Transverse colon (tissue), 4 donors: ENCODE measurements at regions of chr17 and their contacts with region 1.

Region 1: DNA sequence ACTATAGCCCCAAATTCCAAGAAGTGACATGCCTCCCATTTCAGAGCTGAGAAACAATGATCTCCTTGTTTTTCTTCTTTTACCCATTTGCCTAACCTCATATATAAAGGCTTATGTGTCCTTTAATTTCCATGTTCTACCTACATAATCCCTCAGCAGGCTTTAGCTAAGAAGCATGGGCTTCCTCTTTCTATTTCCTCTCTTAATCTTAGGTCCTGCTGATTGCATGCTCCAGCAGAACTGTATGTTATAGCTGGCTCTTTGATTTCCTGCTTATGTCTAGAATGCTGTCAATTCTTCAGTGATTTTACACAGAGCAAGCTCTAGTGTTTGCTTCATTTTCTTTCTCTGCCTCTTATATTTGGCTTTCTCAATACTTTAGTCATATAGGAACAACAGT is 151.7 kb upstream of the COX10 start:
- DNase-seq: no peak
- H3K4me3 ChIP-seq: no peak overlapping the region
- H3K27ac ChIP-seq: no peak overlapping the region
- H3K4me1 ChIP-seq: no peaks in the 10 kb centered on the region
- H3K27me3 ChIP-seq: no peaks in the 10 kb centered on the region
- CTCF ChIP-seq: no peak
- EP300 ChIP-seq: no peak
- POLR2A ChIP-seq: no peak

Region 2: GRCh38 chr17:13907581-13907980 is 10.1 kb before region 1 on chr17:
- in situ Hi-C with region 1: no loop called
- intact Hi-C with region 1: no loop called
- DNase-seq: no peak
- H3K4me3 ChIP-seq: no peak overlapping the region
- H3K27ac ChIP-seq: no peak overlapping the region
- H3K4me1 ChIP-seq: no peaks in the 10 kb centered on the region
- H3K27me3 ChIP-seq: no peaks in the 10 kb centered on the region
- CTCF ChIP-seq: no peak
- EP300 ChIP-seq: no peak
- POLR2A ChIP-seq: no peak

Region 3: DNA sequence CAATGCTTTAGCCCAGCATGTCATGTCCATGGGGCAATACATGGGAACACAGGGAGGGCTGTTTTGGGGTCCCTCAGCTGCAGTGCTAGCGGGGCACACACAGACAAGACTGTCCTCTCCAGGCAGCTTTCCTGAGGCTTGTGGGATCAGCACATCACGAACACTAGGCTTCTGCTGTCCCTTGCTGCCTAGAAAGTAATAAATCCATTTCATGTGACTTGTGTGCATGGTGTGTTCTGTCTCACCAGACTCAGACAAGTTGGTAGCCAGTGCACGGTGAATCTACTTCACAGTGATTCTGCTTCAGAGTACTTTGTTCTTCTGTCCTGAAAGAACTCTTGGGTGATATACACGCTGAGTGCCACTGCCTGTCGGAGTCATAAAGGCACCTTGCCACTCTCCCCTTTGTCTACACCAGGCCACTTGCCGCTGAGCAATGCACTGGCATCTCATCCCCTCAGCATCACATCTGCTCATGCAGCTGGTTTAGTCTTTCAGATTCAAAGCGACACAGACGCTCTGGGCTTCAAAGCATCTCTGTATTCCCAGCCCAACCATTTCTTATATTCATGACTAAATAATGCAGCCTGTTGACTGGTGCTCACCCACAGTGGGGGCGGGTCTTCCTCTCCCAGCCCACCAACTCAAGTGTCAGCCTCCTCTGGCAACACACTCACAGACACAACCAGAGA is 56.5 kb after region 1 on chr17:
- in situ Hi-C with region 1: loop called in 1 of 4 experiments (anchors 10 kb)
- intact Hi-C with region 1: no loop called
- DNase-seq: no peak
- H3K4me3 ChIP-seq: no peak overlapping the region
- H3K27ac ChIP-seq: no peak overlapping the region
- H3K4me1 ChIP-seq: no peaks in the 10 kb centered on the region
- H3K27me3 ChIP-seq: no peaks in the 10 kb centered on the region
- CTCF ChIP-seq: no peak
- EP300 ChIP-seq: no peak
- POLR2A ChIP-seq: no peak

Region 4: GRCh38 chr17:13995856-13996271 is 78.2 kb after region 1 on chr17:
- in situ Hi-C with region 1: no loop called
- intact Hi-C with region 1: no loop called
- DNase-seq: no peak
- H3K4me3 ChIP-seq: no peak overlapping the region
- H3K27ac ChIP-seq: no peak overlapping the region
- H3K4me1 ChIP-seq: no peaks in the 10 kb centered on the region
- H3K27me3 ChIP-seq: no peaks in the 10 kb centered on the region
- CTCF ChIP-seq: no peak
- EP300 ChIP-seq: no peak
- POLR2A ChIP-seq: no peak

Region 5: DNA sequence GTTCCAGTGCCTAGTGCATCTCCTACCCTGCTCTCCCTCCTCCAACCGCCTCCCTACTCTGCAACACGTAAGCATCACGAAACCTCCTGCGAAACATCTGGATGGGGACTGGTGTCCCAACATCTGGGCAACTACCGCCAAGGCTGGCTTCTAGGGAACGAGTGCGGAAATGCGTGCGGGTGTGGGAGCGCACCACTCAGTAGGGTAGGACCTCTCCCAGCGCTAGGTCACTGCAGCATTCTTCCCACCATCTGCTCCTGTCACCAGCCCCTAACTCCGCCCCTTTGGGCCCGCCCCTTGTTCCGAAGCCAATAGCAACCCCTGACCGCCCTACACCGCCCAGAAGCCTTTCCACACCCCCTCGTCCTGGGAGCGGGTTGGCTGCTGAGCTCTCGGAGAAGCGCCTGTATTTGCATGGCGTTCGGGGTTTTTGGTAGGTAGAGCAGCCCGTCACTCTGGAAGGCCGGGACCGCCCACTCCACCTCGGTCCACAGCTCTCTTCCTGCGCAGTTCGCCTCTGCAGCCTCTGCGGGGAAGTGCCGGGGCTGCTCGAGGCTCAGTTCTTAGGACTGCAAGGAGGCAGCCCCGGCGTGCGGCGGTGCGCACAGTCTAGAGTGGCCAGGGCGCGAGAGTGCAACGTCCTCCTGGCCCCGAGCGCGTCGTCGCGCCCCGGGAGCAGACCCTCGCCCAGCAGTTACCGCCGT is 383.1 kb after region 1 on chr17 and contains the start of gene HS3ST3B1:
- in situ Hi-C with region 1: no loop called
- intact Hi-C with region 1: no loop called
- DNase-seq: peak; percentile 94
- H3K4me3 ChIP-seq: peak within 1 kb of the TSS; percentile 26 to 62 (median 45)
- H3K27ac ChIP-seq: peak within 1 kb of the TSS; percentile 76 to 79 (median 77)
- H3K4me1 ChIP-seq: peaks cover 0 to 66% (median 41%) of the 10 kb centered on the region in 4 donors
- H3K27me3 ChIP-seq: peaks cover 96% of the 10 kb centered on the region
- CTCF ChIP-seq: peak in 3 of 5 experiments; percentile 12 to 55 (median 28)
- EP300 ChIP-seq: no peak
- POLR2A ChIP-seq: peak; percentile 83
- total RNA-seq, gene HS3ST3B1: 0.40 to 2.5 (median 1.2) TPM in 3 of 4 donors, not detected in the other

Region 6: DNA sequence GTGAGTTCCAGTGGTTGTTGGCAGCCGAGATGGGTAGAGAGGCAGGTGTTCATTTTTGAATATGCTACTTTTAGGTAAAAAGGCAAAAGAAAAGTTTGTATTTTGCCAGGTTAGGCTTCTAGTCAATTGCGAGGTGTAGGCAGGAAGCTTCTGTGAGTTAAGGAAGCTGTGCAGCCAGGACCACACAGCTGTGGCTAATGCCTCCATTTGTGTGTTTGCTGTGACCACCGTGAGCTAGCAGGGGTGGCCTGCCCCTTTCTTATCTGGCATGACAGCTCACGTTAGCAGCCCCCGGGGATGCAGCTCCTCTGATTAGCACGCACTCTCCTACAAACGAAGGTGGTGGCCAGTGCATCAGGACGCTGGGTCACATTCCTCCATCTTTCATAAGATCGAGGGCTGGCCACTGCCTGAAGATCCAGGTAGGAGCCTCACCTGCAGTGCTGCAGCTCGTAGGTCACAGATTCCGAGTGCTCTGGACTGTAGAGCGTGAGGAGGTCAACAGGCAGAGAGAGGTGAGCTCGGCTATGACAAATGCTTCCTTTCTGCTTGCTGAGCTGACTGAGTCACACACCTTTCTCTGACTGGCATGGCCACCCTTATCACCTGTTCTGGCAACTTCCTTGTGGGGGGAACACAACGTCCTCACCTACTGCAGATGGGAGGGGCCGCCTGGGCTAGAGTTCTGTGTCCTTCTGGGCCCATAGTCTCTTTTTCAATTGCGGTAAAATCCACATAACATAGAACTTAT is 627.7 kb after region 1 on chr17:
- in situ Hi-C with region 1: no loop called
- intact Hi-C with region 1: no loop called
- DNase-seq: no peak
- H3K4me3 ChIP-seq: no peak overlapping the region
- H3K27ac ChIP-seq: no peak overlapping the region
- H3K4me1 ChIP-seq: no peaks in the 10 kb centered on the region
- H3K27me3 ChIP-seq: no peaks in the 10 kb centered on the region
- CTCF ChIP-seq: no peak
- EP300 ChIP-seq: no peak
- POLR2A ChIP-seq: no peak